Naive thymus-derived CD4-positive, alpha-beta T cell (primary cell): ENCODE measurements at regions of chr11 and their contacts with region 1.

Region 1: GRCh38 chr11:18395735-18396504 is 1.6 kb downstream of the LDHA start:
- DNase-seq: peak; percentile 87 to 98 (median 95)
- ATAC-seq: peak; percentile 78
- H3K4me3 ChIP-seq: peak overlapping the region; percentile 78
- H3K4me3 Mint-ChIP-seq: peak overlapping the region; percentile 96 to 99 (median 98)
- H3K27ac ChIP-seq: peak overlapping the region; percentile 95
- H3K27ac Mint-ChIP-seq: peak overlapping the region; percentile 94 to 98 (median 96)
- H3K4me1 ChIP-seq: peaks cover 12 to 14% of the 10 kb centered on the region in 2 donors
- H3K4me1 Mint-ChIP-seq: peaks cover 14 to 63% (median 32%) of the 10 kb centered on the region in 7 donors
- H3K27me3 ChIP-seq: no peaks in the 10 kb centered on the region
- H3K27me3 Mint-ChIP-seq: no peaks in the 10 kb centered on the region

Region 2: DNA sequence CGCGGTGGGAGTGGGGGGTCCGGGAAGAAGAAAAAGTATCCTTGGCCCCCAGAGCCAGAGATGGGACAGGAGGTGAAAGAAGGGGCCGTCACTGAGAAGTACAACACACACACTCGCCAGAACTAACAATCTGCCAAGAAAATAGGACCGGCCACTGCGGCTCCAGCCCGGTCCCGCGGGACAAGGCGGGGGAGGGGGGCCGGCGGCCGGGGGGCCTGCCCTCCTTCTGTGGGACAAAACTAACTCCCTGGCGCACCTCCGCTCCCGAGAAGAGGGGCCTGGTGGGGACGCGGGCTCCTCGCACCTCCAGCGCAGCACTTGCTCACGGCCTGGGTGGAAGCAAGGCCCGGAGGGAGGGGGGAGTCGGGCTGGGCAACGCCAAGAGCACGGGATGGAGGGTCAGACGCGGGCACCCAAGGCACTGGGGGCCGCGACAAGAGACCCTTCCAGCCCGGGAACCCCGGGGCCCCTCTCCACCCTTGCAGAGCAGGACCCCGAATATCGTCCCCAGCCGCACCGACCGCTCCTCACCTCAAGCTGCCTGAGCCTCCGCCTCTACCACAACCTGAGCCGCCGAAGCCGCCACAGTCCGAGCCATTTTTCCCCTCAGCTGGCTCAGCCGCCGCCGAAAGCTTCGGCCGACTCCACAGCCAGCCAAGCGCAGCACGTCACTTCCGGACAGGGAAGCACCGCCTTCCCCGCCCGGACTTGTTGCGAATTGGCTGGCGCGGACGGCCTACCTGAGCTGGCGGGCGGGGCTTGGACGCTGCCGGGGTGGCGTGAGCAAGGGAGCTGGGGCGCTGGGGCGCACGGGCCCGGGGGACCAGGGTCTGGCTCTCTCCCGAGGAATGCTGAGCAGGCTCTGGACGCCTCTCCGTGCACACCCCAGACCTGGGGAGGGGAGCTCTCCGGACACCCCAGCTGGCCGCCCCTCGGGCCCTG is 1188.3 kb before region 1 on chr11 and contains the start of gene PIK3C2A:
- CTCF ChIA-PET with region 1: no interaction called
- POLR2A ChIA-PET with region 1: no interaction called
- intact Hi-C with region 1: loop called in 1 of 2 experiments (anchors 2 kb)
- DNase-seq: peak; percentile 84 to 94 (median 91)
- ATAC-seq: peak; percentile 98
- H3K4me3 ChIP-seq: peak within 1 kb of the TSS; percentile 93
- H3K4me3 Mint-ChIP-seq: peak within 1 kb of the TSS; percentile 90 to 99 (median 98)
- H3K27ac ChIP-seq: peak within 1 kb of the TSS; percentile 93
- H3K27ac Mint-ChIP-seq: peak within 1 kb of the TSS; percentile 87 to 99 (median 97)
- H3K4me1 ChIP-seq: peaks cover 15 to 19% of the 10 kb centered on the region in 2 donors
- H3K4me1 Mint-ChIP-seq: peaks cover 34 to 57% (median 48%) of the 10 kb centered on the region in 7 donors
- H3K27me3 ChIP-seq: no peaks in the 10 kb centered on the region
- H3K27me3 Mint-ChIP-seq: no peaks in the 10 kb centered on the region
- total RNA-seq, gene PIK3C2A: 25.4 to 56.4 (median 42.0) TPM

Region 3: GRCh38 chr11:18105802-18106574 is 289.9 kb before region 1 on chr11 and contains the start of gene SAAL1:
- CTCF ChIA-PET with region 1: no interaction called
- POLR2A ChIA-PET with region 1: interaction called, 3 read pairs
- intact Hi-C with region 1: loop called (anchors 2 to 5 kb)
- DNase-seq: peak; percentile 80 to 95 (median 84)
- ATAC-seq: peak; percentile 99
- H3K4me3 ChIP-seq: peak within 1 kb of the TSS; percentile 93
- H3K4me3 Mint-ChIP-seq: peak within 1 kb of the TSS; percentile 84 to 95 (median 93)
- H3K27ac ChIP-seq: peak within 1 kb of the TSS; percentile 78
- H3K27ac Mint-ChIP-seq: peak within 1 kb of the TSS; percentile 77 to 93 (median 90)
- H3K4me1 ChIP-seq: peaks cover 14 to 15% of the 10 kb centered on the region in 2 donors
- H3K4me1 Mint-ChIP-seq: peaks cover 21 to 54% (median 42%) of the 10 kb centered on the region in 7 donors
- H3K27me3 ChIP-seq: no peaks in the 10 kb centered on the region
- H3K27me3 Mint-ChIP-seq: peaks cover 0 to 15% (median 0%) of the 10 kb centered on the region in 5 donors
- total RNA-seq, gene SAAL1: 16.0 to 25.3 (median 19.3) TPM

Region 4: GRCh38 chr11:18329196-18329870 is 66.6 kb before region 1 on chr11:
- CTCF ChIA-PET with region 1: no interaction called
- POLR2A ChIA-PET with region 1: interaction called, 6 read pairs
- intact Hi-C with region 1: loop called in 1 of 2 experiments (anchors 2 kb)
- DNase-seq: no peak
- ATAC-seq: no peak
- H3K4me3 ChIP-seq: no peak overlapping the region
- H3K4me3 Mint-ChIP-seq: peak overlapping the region in 7 of 10 donors; percentile 4 to 58 (median 20)
- H3K27ac ChIP-seq: peak overlapping the region; percentile 46
- H3K27ac Mint-ChIP-seq: peak overlapping the region; percentile 0 to 80 (median 68)
- H3K4me1 ChIP-seq: peaks cover 39 to 45% of the 10 kb centered on the region in 2 donors
- H3K4me1 Mint-ChIP-seq: peaks cover 44 to 78% (median 71%) of the 10 kb centered on the region in 7 donors
- H3K27me3 ChIP-seq: no peaks in the 10 kb centered on the region
- H3K27me3 Mint-ChIP-seq: no peaks in the 10 kb centered on the region

Region 5: DNA sequence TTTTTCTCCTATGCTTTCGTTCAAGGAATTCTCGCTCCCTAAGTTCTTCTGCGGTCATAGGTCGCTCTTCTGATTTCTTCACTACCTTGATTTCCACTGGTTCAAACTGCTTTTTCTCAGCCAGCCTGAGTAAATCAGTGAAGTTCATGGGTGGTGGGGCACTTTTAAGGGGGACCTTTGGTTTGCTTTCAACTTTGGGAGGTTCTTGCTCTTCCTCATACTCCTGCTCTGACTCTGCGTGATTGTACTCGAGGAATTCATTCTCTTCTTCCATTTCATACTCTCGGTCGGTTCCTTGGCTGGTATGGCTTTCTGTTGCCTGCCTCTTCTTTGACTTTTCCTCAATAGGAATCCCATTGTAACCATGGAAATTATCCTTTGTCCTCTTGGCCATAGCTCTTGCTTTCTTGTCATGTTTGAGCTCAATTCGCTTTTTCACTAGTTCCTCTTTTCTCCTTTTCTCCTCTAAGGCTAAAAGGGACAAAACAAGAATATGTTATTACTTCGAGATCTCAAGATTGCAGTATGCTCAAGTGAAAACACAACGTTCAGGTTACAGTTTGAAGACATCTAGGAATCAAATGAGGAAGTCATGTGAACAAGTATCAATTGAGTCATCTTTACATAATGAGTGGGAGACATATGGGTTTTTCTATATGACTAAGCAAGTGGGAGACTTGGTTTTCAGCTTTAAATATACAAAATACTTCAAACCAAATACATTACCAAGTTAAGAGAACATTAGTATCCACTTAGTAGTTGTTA is 219.9 kb after region 1 on chr11:
- CTCF ChIA-PET with region 1: no interaction called
- POLR2A ChIA-PET with region 1: no interaction called
- intact Hi-C with region 1: loop called in 1 of 2 experiments (anchors 1 kb)
- DNase-seq: no peak
- ATAC-seq: peak; percentile 44
- H3K4me3 ChIP-seq: no peak overlapping the region
- H3K4me3 Mint-ChIP-seq: peak overlapping the region in 1 of 10 donors; percentile 71
- H3K27ac ChIP-seq: no peak overlapping the region
- H3K27ac Mint-ChIP-seq: peak overlapping the region in 3 of 9 donors; percentile 26 to 72 (median 28)
- H3K4me1 ChIP-seq: peaks cover 21 to 29% of the 10 kb centered on the region in 2 donors
- H3K4me1 Mint-ChIP-seq: peaks cover 26 to 59% (median 47%) of the 10 kb centered on the region in 7 donors
- H3K27me3 ChIP-seq: no peaks in the 10 kb centered on the region
- H3K27me3 Mint-ChIP-seq: no peaks in the 10 kb centered on the region

Region 6: GRCh38 chr11:18768472-18768901 is 372.6 kb after region 1 on chr11:
- CTCF ChIA-PET with region 1: no interaction called
- POLR2A ChIA-PET with region 1: no interaction called
- intact Hi-C with region 1: loop called in 1 of 2 experiments (anchors 1 kb)
- DNase-seq: no peak
- ATAC-seq: no peak
- H3K4me3 ChIP-seq: no peak overlapping the region
- H3K4me3 Mint-ChIP-seq: no peak overlapping the region
- H3K27ac ChIP-seq: no peak overlapping the region
- H3K27ac Mint-ChIP-seq: no peak overlapping the region
- H3K4me1 ChIP-seq: no peaks in the 10 kb centered on the region
- H3K4me1 Mint-ChIP-seq: peaks cover 0 to 28% (median 0%) of the 10 kb centered on the region in 7 donors
- H3K27me3 ChIP-seq: no peaks in the 10 kb centered on the region
- H3K27me3 Mint-ChIP-seq: peaks cover 4 to 27% (median 16%) of the 10 kb centered on the region in 5 donors